ENCODE measurements at regions of chr1 and their contacts with region 1.

Region 1: GRCh38 chr1:84959294-84959693 is 37.6 kb downstream of the MCOLN2 start:
- DNase-seq: peak; percentile 41
- H3K4me3 Mint-ChIP-seq: peak overlapping the region; percentile 27
- H3K27ac Mint-ChIP-seq: peak overlapping the region; percentile 59
- H3K4me1 Mint-ChIP-seq: peaks cover 24% of the 10 kb centered on the region
- H3K27me3 Mint-ChIP-seq: no peaks in the 10 kb centered on the region

Region 2: DNA sequence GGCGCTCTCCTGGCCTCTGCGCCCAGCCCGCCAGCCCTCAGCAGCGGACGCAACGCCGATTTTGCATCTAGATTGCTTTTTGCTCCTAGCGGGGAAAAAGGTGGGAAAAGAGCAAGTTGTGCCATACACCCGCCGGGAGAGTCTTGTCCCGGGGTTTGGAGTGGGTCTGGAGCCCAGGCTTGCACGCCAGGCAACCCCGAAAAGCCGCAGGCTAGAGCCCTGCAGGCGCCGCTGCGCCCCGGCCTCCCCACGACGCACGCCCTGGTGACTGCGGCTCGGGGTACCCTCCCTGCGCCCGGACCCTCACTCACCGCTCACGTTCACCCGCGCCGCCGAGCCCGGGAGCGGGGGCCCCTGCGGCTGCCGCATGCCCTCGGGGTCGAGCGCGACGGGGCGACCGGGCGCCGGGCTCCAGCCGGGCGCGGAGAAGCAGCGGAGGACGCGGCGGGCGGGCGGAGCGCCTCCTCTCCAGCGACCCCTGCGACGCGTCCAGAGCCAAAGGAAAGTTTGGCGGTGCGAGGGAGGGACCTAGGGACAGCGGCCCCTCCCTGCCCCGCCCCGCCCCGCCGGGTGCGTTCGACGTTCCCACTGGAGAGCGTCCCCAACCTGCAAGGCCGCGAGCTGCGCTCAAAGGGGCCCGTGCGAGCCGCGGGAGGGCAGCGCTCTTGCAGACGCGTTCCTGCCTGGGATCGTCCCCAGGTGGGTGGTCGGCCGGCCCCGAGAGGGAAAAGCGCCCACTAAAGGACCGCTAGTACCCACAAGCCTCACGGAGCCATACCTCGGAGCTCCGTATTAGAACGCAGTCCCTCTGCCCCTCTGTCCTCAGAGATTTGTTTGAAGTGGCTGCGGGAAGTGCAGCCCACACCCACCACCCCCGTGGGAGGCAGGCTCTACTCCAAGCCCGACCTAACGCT is 66.3 kb before region 1 on chr1 and contains the start of gene LPAR3:
- intact Hi-C with region 1: no loop called
- DNase-seq: no peak
- H3K4me3 Mint-ChIP-seq: peak within 1 kb of the TSS; percentile 81
- H3K27ac Mint-ChIP-seq: no peak within 1 kb of the TSS
- H3K4me1 Mint-ChIP-seq: peaks cover 30% of the 10 kb centered on the region
- H3K27me3 Mint-ChIP-seq: peaks cover 48% of the 10 kb centered on the region
- total RNA-seq, gene LPAR3: 0.34 and 0.47 TPM in 2 replicates

Region 3: DNA sequence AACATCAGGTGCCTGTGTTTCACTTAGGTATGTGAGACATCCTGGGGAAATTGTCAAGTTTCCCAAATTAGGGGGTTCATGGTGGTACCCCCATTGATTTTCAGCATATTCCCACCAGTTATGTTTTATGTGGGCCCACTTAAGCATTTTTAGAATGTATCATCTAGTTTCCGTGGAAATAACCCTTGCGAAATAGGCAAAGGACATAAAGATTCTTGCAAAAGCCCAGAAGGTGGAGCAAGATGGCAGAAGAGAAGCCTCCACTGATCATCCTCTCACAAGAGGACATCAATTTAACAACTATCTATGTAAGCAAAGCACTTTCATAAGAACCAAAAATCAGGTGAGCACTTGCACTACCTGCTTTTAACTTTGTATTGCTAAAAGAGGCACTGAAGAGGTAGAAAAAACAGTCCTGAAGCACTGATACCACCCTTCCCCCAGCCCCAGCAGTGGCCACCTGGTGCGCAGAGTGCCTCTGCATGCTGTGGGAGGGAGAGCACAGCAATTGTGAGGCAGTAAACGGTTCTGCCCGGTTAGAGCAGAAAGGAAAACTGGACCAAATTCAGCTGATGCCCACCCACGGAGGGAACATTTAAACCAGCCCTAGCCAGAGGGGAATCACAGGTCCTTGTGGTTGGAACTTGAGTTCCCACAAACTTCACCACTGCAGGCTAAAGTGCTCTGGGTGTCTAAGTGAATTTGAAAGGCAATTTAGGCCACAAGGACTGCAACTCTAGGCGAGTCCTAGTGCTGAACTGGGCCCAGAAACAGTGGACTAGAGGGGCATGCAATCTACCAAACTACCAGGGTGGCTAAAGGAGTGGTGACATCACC is 14.4 kb after region 1 on chr1:
- intact Hi-C with region 1: loop called (anchors 1 kb)
- DNase-seq: peak; percentile 13
- H3K4me3 Mint-ChIP-seq: peak overlapping the region; percentile 32
- H3K27ac Mint-ChIP-seq: peak overlapping the region; percentile 70
- H3K4me1 Mint-ChIP-seq: peaks cover 82% of the 10 kb centered on the region
- H3K27me3 Mint-ChIP-seq: no peaks in the 10 kb centered on the region

Region 4: DNA sequence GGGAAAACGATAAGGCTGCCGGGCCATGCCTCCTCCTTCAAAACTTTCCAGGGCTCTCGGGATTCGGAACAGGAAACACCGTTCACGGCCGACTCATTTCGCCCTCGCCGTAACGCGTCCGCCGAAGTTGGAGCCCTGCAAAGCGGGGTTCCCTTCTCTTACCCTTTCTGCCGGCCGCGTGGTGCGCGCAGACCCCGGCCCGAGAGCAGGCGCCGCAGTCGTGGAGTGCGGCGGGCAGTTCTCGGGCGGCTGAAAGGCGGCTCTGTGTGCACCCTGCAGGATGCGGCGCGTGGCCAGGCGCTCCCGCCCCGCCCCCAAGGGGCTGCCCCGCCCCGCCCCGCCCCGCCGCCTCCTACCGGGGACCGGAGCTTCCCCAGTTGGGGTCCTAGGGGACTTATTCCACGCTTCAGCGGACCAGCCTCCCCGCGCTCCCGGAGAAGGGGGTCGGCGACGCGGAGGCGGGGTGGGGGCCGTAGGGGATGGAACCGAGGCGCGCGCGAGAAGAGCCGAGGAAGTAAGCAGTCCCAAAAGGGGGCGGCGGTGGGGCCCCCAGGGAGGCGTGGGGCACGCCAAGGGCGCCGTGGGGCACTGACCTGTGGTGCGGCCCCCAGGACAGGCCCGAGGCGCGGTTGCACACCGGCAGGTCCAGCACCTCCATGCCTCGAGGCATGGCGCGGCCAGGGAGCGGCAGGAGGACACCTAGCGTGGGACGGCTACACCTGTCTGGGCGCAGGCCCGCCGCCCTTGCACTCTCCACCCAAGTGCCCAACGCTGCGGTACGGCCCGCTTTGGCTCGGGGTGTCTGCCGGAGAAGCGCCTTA is 37.8 kb after region 1 on chr1 and contains the start of gene MCOLN2:
- intact Hi-C with region 1: loop called (anchors 1 kb)
- DNase-seq: peak; percentile 52
- H3K4me3 Mint-ChIP-seq: peak within 1 kb of the TSS; percentile 88
- H3K27ac Mint-ChIP-seq: peak within 1 kb of the TSS; percentile 88
- H3K4me1 Mint-ChIP-seq: peaks cover 55% of the 10 kb centered on the region
- H3K27me3 Mint-ChIP-seq: peaks cover 12% of the 10 kb centered on the region
- total RNA-seq, gene MCOLN2: 117 and 119 TPM in 2 replicates

Region 5: GRCh38 chr1:85048296-85049064 is 89.2 kb after region 1 on chr1 and contains the start of gene MCOLN3:
- intact Hi-C with region 1: loop called (anchors 1 kb)
- DNase-seq: peak; percentile 28
- H3K4me3 Mint-ChIP-seq: peak within 1 kb of the TSS; percentile 83
- H3K27ac Mint-ChIP-seq: no peak within 1 kb of the TSS
- H3K4me1 Mint-ChIP-seq: peaks cover 37% of the 10 kb centered on the region
- H3K27me3 Mint-ChIP-seq: peaks cover 52% of the 10 kb centered on the region
- total RNA-seq, gene MCOLN3: 1.3 and 1.7 TPM in 2 replicates

Region 6: DNA sequence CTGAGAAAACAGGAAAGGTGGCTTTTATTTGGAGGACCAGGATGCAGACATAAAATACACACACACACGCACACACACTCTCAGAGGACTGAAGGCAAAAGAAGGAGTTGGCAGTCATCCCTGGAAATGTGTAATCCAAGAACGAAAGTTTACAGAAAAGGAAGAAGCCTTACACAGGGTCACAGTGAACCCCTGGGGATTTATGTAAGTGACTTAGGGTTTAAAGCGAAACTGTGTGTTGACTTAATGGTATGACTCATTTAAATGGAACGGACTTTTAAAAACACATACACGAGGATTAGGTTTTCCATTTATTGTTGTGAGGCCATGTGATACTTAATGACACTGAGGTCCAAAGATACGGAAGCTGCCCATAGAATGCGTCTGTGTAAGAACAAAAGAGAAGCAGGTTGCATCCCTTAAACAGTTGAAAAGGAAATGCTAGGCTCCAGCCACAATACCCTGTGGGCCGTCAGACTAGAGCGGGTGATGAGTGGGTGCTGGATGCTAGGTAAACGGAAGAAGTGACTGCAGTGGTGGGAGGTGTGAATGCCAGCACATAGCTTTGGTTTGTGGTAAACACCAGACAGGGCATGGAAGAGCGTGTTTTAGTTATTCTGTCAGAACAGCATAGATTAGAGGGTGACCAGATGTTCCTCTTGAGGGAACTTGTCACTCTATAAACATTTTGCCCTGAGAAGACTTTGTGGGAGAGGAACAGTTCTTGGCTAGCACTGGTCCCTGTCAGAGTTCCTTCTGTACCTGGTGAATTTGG is 338.7 kb after region 1 on chr1:
- intact Hi-C with region 1: loop called (anchors 1 kb)
- DNase-seq: peak; percentile 62
- H3K4me3 Mint-ChIP-seq: peak overlapping the region; percentile 1
- H3K27ac Mint-ChIP-seq: peak overlapping the region; percentile 80
- H3K4me1 Mint-ChIP-seq: peaks cover 34% of the 10 kb centered on the region
- H3K27me3 Mint-ChIP-seq: peaks cover 47% of the 10 kb centered on the region